Gastrocnemius medialis (tissue), 4 donors: ENCODE measurements at regions of chr18 and their contacts with region 1.

Region 1: GRCh38 chr18:25039781-25040180 is 312.2 kb downstream of the ZNF521 start:
- DNase-seq: no peak
- ATAC-seq: no peak
- H3K4me3 ChIP-seq: no peak overlapping the region
- H3K27ac ChIP-seq: no peak overlapping the region
- H3K4me1 ChIP-seq: peaks cover 0 to 17% of the 10 kb centered on the region in 2 donors
- H3K27me3 ChIP-seq: no peaks in the 10 kb centered on the region
- CTCF ChIP-seq: no peak
- POLR2A ChIP-seq: no peak

Region 2: DNA sequence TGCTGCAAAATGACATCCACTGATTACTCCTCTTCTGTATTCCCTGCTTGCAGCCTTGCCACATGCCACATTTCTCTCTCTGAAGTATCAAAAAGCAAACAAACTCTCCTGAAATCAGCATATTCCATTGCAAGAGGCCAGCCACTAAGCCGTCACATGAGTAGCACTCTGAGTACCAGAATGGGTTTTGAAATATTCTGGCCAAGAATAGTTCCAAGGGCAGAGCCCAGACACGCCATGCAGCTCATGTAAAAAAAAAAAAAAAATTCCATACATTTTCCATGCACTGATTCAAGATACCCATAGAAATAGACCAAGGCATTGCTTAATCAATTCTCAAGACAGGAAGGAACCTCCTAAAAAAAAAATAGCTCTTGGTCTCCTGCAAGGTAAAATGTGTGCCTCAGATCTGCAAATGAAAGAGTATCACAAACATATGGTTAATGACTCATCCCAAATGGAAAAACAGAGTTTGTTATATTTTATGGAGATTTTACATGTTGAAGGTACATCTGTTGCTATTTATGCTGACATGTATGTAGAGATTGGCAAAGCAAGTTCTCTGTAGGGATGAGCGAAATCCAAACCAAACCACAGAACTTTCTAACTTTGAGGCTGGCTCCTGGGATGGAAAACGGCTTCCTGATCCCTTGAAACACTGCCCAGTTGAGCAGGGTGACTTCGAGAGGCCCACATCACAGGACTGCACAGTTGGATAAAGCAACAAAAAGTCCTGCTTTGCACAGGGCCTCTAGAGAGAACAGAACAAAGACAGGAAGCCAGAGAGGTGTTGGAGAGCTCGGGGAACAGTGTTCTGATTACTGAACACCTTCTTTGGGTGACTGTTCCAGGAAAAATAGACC is 34.0 kb before region 1 on chr18:
- in situ Hi-C with region 1: no loop called
- intact Hi-C with region 1: loop called (anchors 2 kb)
- DNase-seq: no peak
- ATAC-seq: peak; percentile 79 to 84
- H3K4me3 ChIP-seq: no peak overlapping the region
- H3K27ac ChIP-seq: peak overlapping the region; percentile 45 to 68 (median 61)
- H3K4me1 ChIP-seq: peaks cover 12 to 14% of the 10 kb centered on the region in 2 donors
- H3K27me3 ChIP-seq: no peaks in the 10 kb centered on the region
- CTCF ChIP-seq: no peak
- POLR2A ChIP-seq: no peak

Region 3: DNA sequence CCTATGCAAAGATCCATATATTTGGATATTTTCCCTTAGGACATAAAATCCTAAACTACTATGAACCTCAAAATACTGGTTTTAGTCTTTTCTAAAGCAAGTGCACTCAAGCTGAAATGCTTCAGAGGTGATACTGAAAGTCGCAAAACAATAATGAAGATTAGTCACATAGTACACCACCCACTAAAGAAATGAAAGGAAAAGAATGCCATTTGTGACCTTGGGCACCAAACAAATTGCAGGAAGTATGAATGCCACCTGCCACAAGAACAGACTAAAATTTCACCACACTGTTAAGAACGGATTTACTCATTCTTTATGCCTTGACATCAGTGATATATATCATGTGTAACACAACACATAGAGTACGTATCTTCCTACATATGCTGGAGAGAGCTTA is 150.7 kb after region 1 on chr18:
- in situ Hi-C with region 1: no loop called
- intact Hi-C with region 1: no loop called
- DNase-seq: no peak
- ATAC-seq: no peak
- H3K4me3 ChIP-seq: no peak overlapping the region
- H3K27ac ChIP-seq: no peak overlapping the region
- H3K4me1 ChIP-seq: no peaks in the 10 kb centered on the region
- H3K27me3 ChIP-seq: no peaks in the 10 kb centered on the region
- CTCF ChIP-seq: no peak
- POLR2A ChIP-seq: no peak